ENCODE measurements at regions of chr17 and their contacts with region 1.

Region 1: DNA sequence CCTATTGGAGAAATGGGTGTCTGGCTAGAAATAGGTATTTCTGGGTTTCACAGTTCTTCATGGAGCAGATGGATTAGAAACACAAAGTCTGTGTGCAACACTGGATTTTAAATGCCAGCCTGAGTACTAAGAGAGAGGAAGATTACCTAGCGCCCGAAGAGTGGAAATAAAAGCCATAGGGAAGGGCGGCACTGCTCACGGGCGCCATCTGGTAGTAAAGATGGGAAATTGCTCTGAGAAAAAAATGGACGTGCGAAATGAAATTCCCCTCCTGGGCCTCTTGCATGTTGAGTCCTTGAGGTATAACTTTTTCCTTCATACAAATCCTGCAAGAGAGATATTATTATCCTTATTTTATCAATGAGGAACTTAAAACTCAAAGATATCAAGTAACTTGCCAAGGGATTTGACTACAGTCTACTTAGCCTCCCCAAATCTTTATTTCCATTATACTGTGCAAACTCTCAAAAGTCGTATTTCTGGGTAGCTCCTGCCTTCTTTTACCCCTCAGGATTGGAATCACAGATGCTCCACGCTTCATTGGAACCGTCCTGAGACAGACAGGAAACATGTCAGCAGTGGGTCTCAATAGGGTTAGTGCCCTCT is 72.8 kb downstream of the MMD start:
- DNase-seq: peak; percentile 38
- H3K4me3 ChIP-seq: no peak overlapping the region
- H3K27ac ChIP-seq: no peak overlapping the region
- H3K4me1 ChIP-seq: no peaks in the 10 kb centered on the region
- H3K27me3 ChIP-seq: no peaks in the 10 kb centered on the region
- CTCF ChIP-seq: peak; percentile 81 to 89

Region 2: GRCh38 chr17:55303701-55304145 is 45.1 kb before region 1 on chr17:
- CTCF ChIA-PET with region 1: no interaction called
- dilution Hi-C with region 1: no loop called
- in situ Hi-C with region 1: no loop called
- intact Hi-C with region 1: loop called (anchors 2 kb)
- DNase-seq: no peak
- H3K4me3 ChIP-seq: no peak overlapping the region
- H3K27ac ChIP-seq: no peak overlapping the region
- H3K4me1 ChIP-seq: peaks cover 2% of the 10 kb centered on the region
- H3K27me3 ChIP-seq: no peaks in the 10 kb centered on the region
- CTCF ChIP-seq: peak in 1 of 2 donors; percentile 21

Region 3: DNA sequence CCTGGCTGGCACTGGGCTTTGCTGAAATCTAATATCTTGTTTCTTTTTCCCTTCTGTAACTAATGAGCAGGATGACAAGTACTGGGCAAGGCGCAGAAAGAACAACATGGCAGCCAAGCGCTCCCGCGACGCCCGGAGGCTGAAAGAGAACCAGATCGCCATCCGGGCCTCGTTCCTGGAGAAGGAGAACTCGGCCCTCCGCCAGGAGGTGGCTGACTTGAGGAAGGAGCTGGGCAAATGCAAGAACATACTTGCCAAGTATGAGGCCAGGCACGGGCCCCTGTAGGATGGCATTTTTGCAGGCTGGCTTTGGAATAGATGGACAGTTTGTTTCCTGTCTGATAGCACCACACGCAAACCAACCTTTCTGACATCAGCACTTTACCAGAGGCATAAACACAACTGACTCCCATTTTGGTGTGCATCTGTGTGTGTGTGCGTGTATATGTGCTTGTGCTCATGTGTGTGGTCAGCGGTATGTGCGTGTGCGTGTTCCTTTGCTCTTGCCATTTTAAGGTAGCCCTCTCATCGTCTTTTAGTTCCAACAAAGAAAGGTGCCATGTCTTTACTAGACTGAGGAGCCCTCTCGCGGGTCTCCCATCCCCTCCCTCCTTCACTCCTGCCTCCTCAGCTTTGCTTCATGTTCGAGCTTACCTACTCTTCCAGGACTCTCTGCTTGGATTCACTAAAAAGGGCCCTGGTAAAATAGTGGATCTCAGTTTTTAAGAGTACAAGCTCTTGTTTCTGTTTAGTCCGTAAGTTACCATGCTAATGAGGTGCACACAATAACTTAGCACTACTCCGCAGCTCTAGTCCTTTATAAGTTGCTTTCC is 28.0 kb before region 1 on chr17:
- CTCF ChIA-PET with region 1: no interaction called
- dilution Hi-C with region 1: no loop called
- in situ Hi-C with region 1: no loop called
- intact Hi-C with region 1: loop called (anchors 2 kb)
- DNase-seq: peak; percentile 65
- H3K4me3 ChIP-seq: no peak overlapping the region
- H3K27ac ChIP-seq: no peak overlapping the region
- H3K4me1 ChIP-seq: peaks cover 13% of the 10 kb centered on the region
- H3K27me3 ChIP-seq: no peaks in the 10 kb centered on the region
- CTCF ChIP-seq: no peak